GM12878 (cell line): ENCODE measurements at regions of chr6 and their contacts with region 1.

Region 1: GRCh38 chr6:15340775-15341174 is 94.9 kb downstream of the JARID2 start:
- DNase-seq: no peak
- ATAC-seq: peak; percentile 72
- H3K4me3 ChIP-seq: peak overlapping the region; percentile 6; the same call in 1 of the 2 replicates
- H3K27ac ChIP-seq: peak overlapping the region; percentile 80
- H3K4me1 ChIP-seq: peaks cover 50% of the 10 kb centered on the region
- H3K27me3 ChIP-seq: no peaks in the 10 kb centered on the region
- CTCF ChIP-seq: no peak
- EP300 ChIP-seq: no peak; a peak in 1 of 4 replicates
- POLR2A ChIP-seq: no peak
- RAD21 ChIP-seq: no peak

Region 2: GRCh38 chr6:15351631-15352030 is 10.9 kb after region 1 on chr6:
- CTCF ChIA-PET with region 1: interaction called, 38 read pairs
- POLR2A ChIA-PET with region 1: interaction called, 14 read pairs
- RAD21 ChIA-PET with region 1: interaction called, 8 read pairs
- SMC1A ChIA-PET with region 1: interaction called, 85 read pairs
- in situ Hi-C with region 1: no loop called
- intact Hi-C with region 1: no loop called
- DNase-seq: no peak
- ATAC-seq: no peak
- H3K4me3 ChIP-seq: no peak overlapping the region
- H3K27ac ChIP-seq: peak overlapping the region; percentile 65
- H3K4me1 ChIP-seq: peaks cover 39% of the 10 kb centered on the region
- H3K27me3 ChIP-seq: no peaks in the 10 kb centered on the region
- CTCF ChIP-seq: no peak
- EP300 ChIP-seq: no peak
- POLR2A ChIP-seq: no peak
- RAD21 ChIP-seq: no peak

Region 3: GRCh38 chr6:15358579-15359327 is 18.0 kb after region 1 on chr6:
- CTCF ChIA-PET with region 1: interaction called, 38 read pairs
- POLR2A ChIA-PET with region 1: interaction called, 14 read pairs
- RAD21 ChIA-PET with region 1: interaction called, 9 read pairs
- SMC1A ChIA-PET with region 1: interaction called, 85 read pairs
- in situ Hi-C with region 1: no loop called
- intact Hi-C with region 1: no loop called
- DNase-seq: peak; percentile 75
- ATAC-seq: peak; percentile 80
- H3K4me3 ChIP-seq: peak overlapping the region; percentile 27
- H3K27ac ChIP-seq: peak overlapping the region; percentile 81
- H3K4me1 ChIP-seq: peaks cover 75% of the 10 kb centered on the region
- H3K27me3 ChIP-seq: no peaks in the 10 kb centered on the region
- CTCF ChIP-seq: no peak
- EP300 ChIP-seq: no peak; a peak in 1 of 4 replicates
- POLR2A ChIP-seq: no peak
- RAD21 ChIP-seq: no peak